BJ (cell line): ENCODE measurements at regions of chr1 and their contacts with region 1.

Region 1: GRCh38 chr1:109383080-109383769 is 14.5 kb downstream of the SORT1 start:
- DNase-seq: no peak
- H3K4me3 ChIP-seq: no peak overlapping the region
- H3K27me3 ChIP-seq: no peaks in the 10 kb centered on the region
- CTCF ChIP-seq: no peak

Region 2: GRCh38 chr1:109277434-109278204 is 105.6 kb before region 1 on chr1:
- CTCF ChIA-PET with region 1: interaction called, 10 read pairs
- POLR2A ChIA-PET with region 1: no interaction called
- DNase-seq: no peak
- H3K4me3 ChIP-seq: no peak overlapping the region
- H3K27me3 ChIP-seq: no peaks in the 10 kb centered on the region
- CTCF ChIP-seq: peak; percentile 93